A549 (cell line): ENCODE measurements at regions of chr17 and their contacts with region 1.

Region 1: GRCh38 chr17:69523244-69523861 is 108.9 kb downstream of the MAP2K6 start:
- DNase-seq: peak; percentile 28 to 72
- ATAC-seq: peak; percentile 80 to 88
- H3K4me3 ChIP-seq: no peak overlapping the region
- H3K27ac ChIP-seq: no peak overlapping the region
- H3K4me1 ChIP-seq: no peaks in the 10 kb centered on the region
- CTCF ChIP-seq: peak; percentile 82
- EP300 ChIP-seq: no peak
- POLR2A ChIP-seq: no peak
- RAD21 ChIP-seq: peak; percentile 88

Region 2: GRCh38 chr17:69335058-69335457 is 188.3 kb before region 1 on chr17:
- CTCF ChIA-PET with region 1: interaction called, 28 read pairs
- POLR2A ChIA-PET with region 1: no interaction called
- DNase-seq: peak; percentile 39 to 68
- ATAC-seq: peak in 1 of 2 experiments; percentile 53; a peak in 2 of 6 replicates
- H3K4me3 ChIP-seq: no peak overlapping the region
- H3K27ac ChIP-seq: no peak overlapping the region
- H3K4me1 ChIP-seq: no peaks in the 10 kb centered on the region
- CTCF ChIP-seq: peak; percentile 48
- EP300 ChIP-seq: no peak
- POLR2A ChIP-seq: no peak
- RAD21 ChIP-seq: peak; percentile 55 to 70

Region 3: GRCh38 chr17:69404382-69404781 is 119.0 kb before region 1 on chr17:
- CTCF ChIA-PET with region 1: interaction called, 10 read pairs
- POLR2A ChIA-PET with region 1: no interaction called
- DNase-seq: peak in 1 of 2 experiments; percentile 56
- ATAC-seq: peak; percentile 49 to 66; a peak in 5 of 6 replicates
- H3K4me3 ChIP-seq: no peak overlapping the region
- H3K27ac ChIP-seq: peak overlapping the region; percentile 62 to 80
- H3K4me1 ChIP-seq: peaks cover 54% of the 10 kb centered on the region
- CTCF ChIP-seq: no peak
- EP300 ChIP-seq: peak in 1 of 2 experiments; percentile 68; a peak in 1 of 5 replicates
- POLR2A ChIP-seq: no peak
- RAD21 ChIP-seq: no peak

Region 4: DNA sequence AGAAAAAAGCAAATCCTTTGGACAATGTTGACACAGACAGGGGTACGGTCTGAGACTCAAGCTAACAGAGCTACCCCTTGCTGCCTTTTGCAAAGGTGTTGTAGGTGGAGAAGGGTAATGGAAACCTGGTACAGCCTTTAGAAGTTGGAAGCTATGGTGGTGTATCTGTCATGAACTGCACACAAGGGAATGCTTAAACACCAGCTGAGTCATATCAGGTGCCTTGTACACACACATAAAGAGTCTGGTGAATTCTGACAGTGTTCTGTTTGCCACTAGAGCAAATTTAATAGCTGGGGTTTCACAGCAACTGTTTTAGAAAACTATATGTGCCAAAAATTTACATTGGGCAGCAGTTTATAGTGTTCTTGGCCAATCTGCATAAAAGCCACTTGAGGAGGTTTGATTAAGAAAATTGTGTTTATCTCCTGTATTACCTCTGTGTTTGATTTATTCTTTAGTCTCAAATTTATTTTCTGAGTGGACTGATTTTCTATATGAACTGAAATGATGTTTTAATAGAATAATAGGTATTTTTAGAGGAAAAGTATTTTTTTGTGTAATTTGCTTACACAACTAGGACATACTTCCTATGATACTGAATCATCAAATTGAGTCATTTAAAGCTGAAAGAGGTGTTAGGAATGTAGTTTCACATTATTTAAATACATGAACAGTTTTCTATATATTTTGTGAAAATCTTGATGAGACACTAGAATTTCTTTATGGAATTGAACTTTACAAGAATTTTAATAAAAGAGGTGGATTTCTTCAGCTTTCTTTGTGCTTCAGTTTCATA is 28.1 kb after region 1 on chr17:
- CTCF ChIA-PET with region 1: interaction called, 22 read pairs
- POLR2A ChIA-PET with region 1: no interaction called
- DNase-seq: no peak
- ATAC-seq: peak; percentile 59 to 74; a peak in 5 of 6 replicates
- H3K4me3 ChIP-seq: no peak overlapping the region
- H3K27ac ChIP-seq: no peak overlapping the region
- H3K4me1 ChIP-seq: peaks cover 9% of the 10 kb centered on the region; the same call in 1 of the 3 replicates
- CTCF ChIP-seq: no peak
- EP300 ChIP-seq: no peak
- POLR2A ChIP-seq: no peak
- RAD21 ChIP-seq: no peak

Region 5: GRCh38 chr17:69654981-69655855 is 131.9 kb after region 1 on chr17:
- CTCF ChIA-PET with region 1: no interaction called
- POLR2A ChIA-PET with region 1: no interaction called
- DNase-seq: peak in 1 of 2 experiments; percentile 11
- ATAC-seq: peak; percentile 70 to 71; a peak in 5 of 6 replicates
- H3K4me3 ChIP-seq: no peak overlapping the region
- H3K27ac ChIP-seq: no peak overlapping the region
- H3K4me1 ChIP-seq: peaks cover 9% of the 10 kb centered on the region
- CTCF ChIP-seq: no peak
- EP300 ChIP-seq: no peak
- POLR2A ChIP-seq: no peak
- RAD21 ChIP-seq: no peak

Region 6: GRCh38 chr17:70552230-70552981 is 1029.1 kb after region 1 on chr17:
- CTCF ChIA-PET with region 1: interaction called, 64 read pairs
- POLR2A ChIA-PET with region 1: no interaction called
- DNase-seq: peak; percentile 26 to 42
- ATAC-seq: peak; percentile 57 to 64; a peak in 4 of 6 replicates
- H3K4me3 ChIP-seq: no peak overlapping the region
- H3K27ac ChIP-seq: no peak overlapping the region
- H3K4me1 ChIP-seq: no peaks in the 10 kb centered on the region
- CTCF ChIP-seq: peak; percentile 77
- EP300 ChIP-seq: no peak
- POLR2A ChIP-seq: no peak
- RAD21 ChIP-seq: peak; percentile 68 to 80